Dendritic cell treated with granulocyte-macrophage colony-stimulating factor and Interleukin-4, amounts not matched to agents 40 ng/mL and 50 ng/mL, for 4 days (primary cell): ENCODE measurements at regions of chr2 and their contacts with region 1.

Region 1: GRCh38 chr2:215749092-215749957 is 264.0 kb downstream of the MREG start:
- H3K4me3 Mint-ChIP-seq: no peak overlapping the region
- H3K27ac Mint-ChIP-seq: peak overlapping the region; percentile 87
- H3K4me1 Mint-ChIP-seq: peaks cover 76% of the 10 kb centered on the region
- H3K27me3 Mint-ChIP-seq: peaks cover 3% of the 10 kb centered on the region

Region 2: DNA sequence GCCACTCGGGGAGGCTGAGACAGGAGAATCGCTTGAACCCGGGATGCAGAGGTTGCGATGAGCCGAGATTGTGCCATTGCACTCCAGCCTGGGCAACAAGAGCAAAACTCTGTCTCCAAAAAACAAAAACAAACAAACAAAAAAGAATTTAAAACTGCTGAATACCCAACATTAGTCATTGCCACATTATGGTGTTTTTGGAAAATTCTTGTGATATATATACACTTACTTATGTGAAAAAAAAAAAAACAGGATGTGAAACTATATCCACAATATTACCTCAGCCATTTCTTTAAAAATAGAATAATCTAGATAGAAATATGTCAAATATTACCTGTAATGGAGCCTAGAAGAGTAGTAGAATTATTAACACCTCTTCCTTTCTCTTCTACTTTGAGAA is 25.2 kb before region 1 on chr2:
- intact Hi-C with region 1: loop called (anchors 1 kb)
- H3K4me3 Mint-ChIP-seq: no peak overlapping the region
- H3K27ac Mint-ChIP-seq: peak overlapping the region; percentile 72
- H3K4me1 Mint-ChIP-seq: peaks cover 34% of the 10 kb centered on the region
- H3K27me3 Mint-ChIP-seq: no peaks in the 10 kb centered on the region

Region 3: GRCh38 chr2:215793747-215794595 is 44.6 kb after region 1 on chr2:
- intact Hi-C with region 1: loop called (anchors 5 kb)
- H3K4me3 Mint-ChIP-seq: peak overlapping the region; percentile 20
- H3K27ac Mint-ChIP-seq: peak overlapping the region; percentile 88
- H3K4me1 Mint-ChIP-seq: peaks cover 57% of the 10 kb centered on the region
- H3K27me3 Mint-ChIP-seq: peaks cover 13% of the 10 kb centered on the region

Region 4: DNA sequence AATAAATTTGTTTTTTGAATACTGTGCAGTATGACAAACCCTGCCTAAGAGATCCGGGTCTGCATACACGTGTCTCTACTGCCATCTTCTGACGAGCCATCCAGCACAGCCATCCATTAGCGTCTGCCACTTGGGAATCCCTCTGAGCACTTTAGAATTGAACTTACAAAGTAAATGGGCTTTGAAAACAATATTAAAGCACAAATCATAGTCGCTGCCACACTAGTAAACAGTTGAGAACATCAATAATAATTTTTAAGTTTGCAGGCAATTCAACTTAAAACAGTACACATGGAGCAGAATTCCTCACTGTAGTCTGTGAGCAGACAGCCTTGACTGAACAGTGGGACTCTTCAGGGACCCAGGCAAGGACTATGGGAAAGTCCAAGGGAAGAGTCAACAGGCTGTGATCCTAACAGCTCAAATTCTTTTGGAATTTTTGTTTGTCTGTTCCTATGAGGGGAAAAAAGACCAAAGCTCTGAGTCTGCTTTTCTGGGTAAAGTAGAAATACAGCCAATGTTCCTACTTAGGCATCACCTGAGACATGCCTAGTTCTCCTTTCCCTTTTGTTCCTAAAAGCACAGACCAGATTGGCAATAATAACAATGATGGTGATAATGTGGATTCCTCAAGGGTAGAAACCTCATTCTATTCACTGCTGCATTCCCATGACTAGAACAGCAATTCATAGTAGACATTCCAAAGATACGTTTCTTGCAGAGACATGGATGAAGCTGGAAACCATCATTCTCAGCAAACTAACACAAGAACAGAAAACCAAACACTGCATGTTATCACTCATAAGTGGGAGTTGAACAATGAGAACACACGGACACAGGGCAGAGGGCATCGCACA is 171.1 kb after region 1 on chr2:
- intact Hi-C with region 1: loop called (anchors 1 kb)
- H3K4me3 Mint-ChIP-seq: no peak overlapping the region
- H3K27ac Mint-ChIP-seq: peak overlapping the region; percentile 93
- H3K4me1 Mint-ChIP-seq: peaks cover 40% of the 10 kb centered on the region
- H3K27me3 Mint-ChIP-seq: peaks cover 14% of the 10 kb centered on the region